ENCODE measurements at regions of chr7 and their contacts with region 1.

Region 1: GRCh38 chr7:123705211-123705901 is 43.4 kb downstream of the WASL start:
- DNase-seq: no peak
- H3K4me3 ChIP-seq: no peak overlapping the region
- H3K4me3 Mint-ChIP-seq: no peak overlapping the region
- H3K27ac Mint-ChIP-seq: no peak overlapping the region
- H3K4me1 ChIP-seq: peaks cover 14% of the 10 kb centered on the region
- H3K4me1 Mint-ChIP-seq: peaks cover 10% of the 10 kb centered on the region
- H3K27me3 ChIP-seq: no peaks in the 10 kb centered on the region
- H3K27me3 Mint-ChIP-seq: no peaks in the 10 kb centered on the region
- CTCF ChIP-seq: no peak

Region 2: DNA sequence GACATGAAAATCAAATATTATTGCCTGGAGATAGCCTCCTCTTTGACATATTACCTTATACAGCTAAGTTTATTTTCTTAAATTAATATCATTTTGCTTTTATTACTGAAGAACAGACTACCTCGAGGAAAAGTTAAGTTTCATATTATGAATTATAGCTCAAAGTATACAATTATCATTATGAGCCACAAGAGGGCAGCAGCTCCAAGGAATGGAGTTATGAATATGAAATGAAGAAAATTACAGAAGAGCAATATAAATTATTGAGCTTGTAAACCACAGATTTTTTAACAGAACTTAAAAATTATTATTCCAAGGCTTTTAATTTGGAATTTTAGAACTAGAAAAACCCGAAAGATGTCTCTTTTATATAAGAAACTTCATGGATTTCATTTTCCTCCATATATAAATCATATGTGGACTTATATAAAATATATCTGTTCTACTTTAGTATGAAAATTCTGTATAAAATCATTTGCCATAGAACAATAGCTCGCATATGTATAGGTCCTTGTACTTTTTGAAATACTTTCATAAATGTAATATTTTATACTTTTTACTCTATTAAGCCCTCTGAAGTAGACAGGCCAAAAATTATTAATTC is 211.1 kb before region 1 on chr7:
- CTCF ChIA-PET with region 1: interaction called, 4 read pairs
- POLR2A ChIA-PET with region 1: no interaction called
- intact Hi-C with region 1: loop called (anchors 1 kb)
- DNase-seq: peak in 1 of 2 experiments; percentile 30
- H3K4me3 ChIP-seq: no peak overlapping the region
- H3K4me3 Mint-ChIP-seq: no peak overlapping the region
- H3K27ac Mint-ChIP-seq: no peak overlapping the region
- H3K4me1 ChIP-seq: no peaks in the 10 kb centered on the region
- H3K4me1 Mint-ChIP-seq: peaks cover 7% of the 10 kb centered on the region
- H3K27me3 ChIP-seq: no peaks in the 10 kb centered on the region
- H3K27me3 Mint-ChIP-seq: peaks cover 3% of the 10 kb centered on the region
- CTCF ChIP-seq: peak; percentile 50 to 56

Region 3: DNA sequence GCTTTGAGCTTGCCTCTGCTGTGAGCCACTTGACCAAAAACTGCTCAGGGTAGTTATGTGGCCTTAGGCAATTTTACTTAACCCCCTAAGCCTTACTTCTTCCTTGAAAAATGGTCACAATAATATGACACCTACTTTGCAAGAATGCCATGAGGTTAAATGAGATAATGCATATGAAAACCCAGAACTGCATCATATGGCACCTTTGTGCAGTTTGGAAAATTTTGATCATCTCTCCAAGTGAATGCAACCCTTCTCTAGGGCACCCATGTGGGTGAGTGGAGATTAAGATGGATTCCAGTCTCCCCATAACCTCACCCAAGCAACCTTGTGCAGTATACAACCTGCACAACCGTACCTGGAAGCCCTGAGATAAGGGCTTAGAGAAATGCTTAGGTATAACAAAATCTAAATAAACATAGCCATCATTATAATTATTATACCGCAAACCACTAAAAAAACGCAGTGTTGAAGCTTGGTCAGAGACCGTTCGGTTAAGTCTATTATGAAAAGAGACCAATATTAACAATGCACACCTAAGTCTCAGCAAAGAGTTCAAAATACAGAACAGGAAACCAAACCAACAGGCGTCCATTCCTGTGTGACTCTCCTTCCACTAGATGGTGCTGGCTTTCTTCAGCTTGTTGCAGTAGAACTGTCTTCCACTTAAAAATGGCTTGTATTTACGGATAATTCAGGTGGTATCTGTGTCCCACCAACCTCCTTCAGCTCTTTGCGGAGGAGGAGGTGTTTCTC is 124.8 kb before region 1 on chr7:
- CTCF ChIA-PET with region 1: interaction called, 6 read pairs
- POLR2A ChIA-PET with region 1: no interaction called
- intact Hi-C with region 1: loop called (anchors 1 kb)
- DNase-seq: peak; percentile 52 to 64
- H3K4me3 ChIP-seq: no peak overlapping the region
- H3K4me3 Mint-ChIP-seq: peak overlapping the region; percentile 58
- H3K27ac Mint-ChIP-seq: no peak overlapping the region
- H3K4me1 ChIP-seq: no peaks in the 10 kb centered on the region
- H3K4me1 Mint-ChIP-seq: peaks cover 5% of the 10 kb centered on the region
- H3K27me3 ChIP-seq: no peaks in the 10 kb centered on the region
- H3K27me3 Mint-ChIP-seq: peaks cover 4% of the 10 kb centered on the region
- CTCF ChIP-seq: peak; percentile 88 to 92

Region 4: DNA sequence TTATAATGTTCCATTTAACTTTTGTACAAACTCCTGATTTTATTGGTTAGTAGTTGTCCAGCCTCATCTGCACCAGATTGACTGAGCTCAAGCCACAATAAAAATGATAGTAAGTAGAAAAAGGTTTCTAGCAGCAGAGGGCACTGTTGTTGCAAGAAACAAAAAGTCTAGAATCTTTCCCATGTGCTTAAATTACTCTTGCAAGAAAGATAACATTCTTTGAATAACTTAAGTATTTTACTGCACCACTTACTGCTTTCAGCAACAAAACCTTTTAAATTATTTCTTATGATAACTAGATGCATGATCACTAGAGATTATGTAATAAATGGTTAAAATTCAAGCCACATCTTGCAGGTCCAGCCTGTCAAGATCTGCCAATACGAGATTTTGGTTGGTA is 22.7 kb before region 1 on chr7:
- CTCF ChIA-PET with region 1: interaction called, 9 read pairs
- POLR2A ChIA-PET with region 1: no interaction called
- intact Hi-C with region 1: loop called (anchors 1 kb)
- DNase-seq: peak in 1 of 2 experiments; percentile 54
- H3K4me3 ChIP-seq: no peak overlapping the region
- H3K4me3 Mint-ChIP-seq: no peak overlapping the region
- H3K27ac Mint-ChIP-seq: no peak overlapping the region
- H3K4me1 ChIP-seq: peaks cover 19% of the 10 kb centered on the region
- H3K4me1 Mint-ChIP-seq: no peaks in the 10 kb centered on the region
- H3K27me3 ChIP-seq: no peaks in the 10 kb centered on the region
- H3K27me3 Mint-ChIP-seq: no peaks in the 10 kb centered on the region
- CTCF ChIP-seq: peak; percentile 47 to 61

Measured in Caco-2 (cell line).